ENCODE measurements at regions of chr19 and their contacts with region 1.

Region 1: DNA sequence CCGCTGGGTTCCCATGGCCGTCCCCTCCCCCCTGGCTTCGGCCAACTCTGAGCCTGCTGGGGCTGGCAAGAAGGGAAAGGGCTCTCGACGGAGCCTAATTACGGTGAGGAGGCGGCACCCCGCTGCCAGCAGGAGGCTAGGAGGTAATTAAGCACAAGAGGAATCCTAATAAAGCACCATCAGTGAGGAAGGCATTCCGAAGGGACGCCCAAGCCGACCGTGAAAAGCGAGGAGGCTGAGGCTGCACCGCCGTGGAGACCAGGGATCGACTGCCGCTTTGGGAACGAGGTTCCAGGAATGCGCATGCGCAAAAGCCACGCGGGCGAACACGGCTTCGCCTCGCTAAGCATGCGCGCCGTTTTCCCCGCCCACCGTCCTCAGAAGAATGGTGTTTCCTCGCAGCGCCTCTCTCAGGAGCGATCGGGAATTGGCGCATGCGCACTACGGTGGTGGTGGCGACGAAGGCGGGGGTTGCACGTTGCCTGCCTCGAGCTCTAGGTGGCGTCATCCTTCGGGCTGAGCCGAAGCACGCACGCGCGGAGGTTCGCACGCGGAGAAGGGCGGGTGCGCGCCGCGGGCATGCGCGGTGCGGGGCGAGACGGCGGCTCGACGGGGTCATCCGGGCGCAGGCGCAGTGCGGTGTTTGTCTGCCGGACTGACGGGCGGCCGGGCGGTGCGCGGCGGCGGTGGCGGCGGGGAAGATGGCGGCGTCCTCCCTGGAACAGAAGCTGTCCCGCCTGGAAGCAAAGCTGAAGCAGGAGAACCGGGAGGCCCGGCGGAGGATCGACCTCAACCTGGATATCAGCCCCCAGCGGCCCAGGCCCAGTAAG is at the start of gene MAP2K7:
- DNase-seq: peak; percentile 99
- H3K4me3 ChIP-seq: peak within 1 kb of the TSS; percentile 80 to 87
- H3K27ac ChIP-seq: peak within 1 kb of the TSS; percentile 68 to 89; a peak in 3 of 4 replicates
- H3K4me1 ChIP-seq: peaks cover 0 to 19% of the 10 kb centered on the region in 2 experiments; a peak in 2 of 4 replicates
- H3K27me3 ChIP-seq: no peaks in the 10 kb centered on the region
- CTCF ChIP-seq: peak; percentile 60
- EP300 ChIP-seq: no peak
- RAD21 ChIP-seq: peak; percentile 54
- polyA plus RNA-seq, gene MAP2K7: 13.0 and 13.6 TPM in 2 replicates

Region 2: DNA sequence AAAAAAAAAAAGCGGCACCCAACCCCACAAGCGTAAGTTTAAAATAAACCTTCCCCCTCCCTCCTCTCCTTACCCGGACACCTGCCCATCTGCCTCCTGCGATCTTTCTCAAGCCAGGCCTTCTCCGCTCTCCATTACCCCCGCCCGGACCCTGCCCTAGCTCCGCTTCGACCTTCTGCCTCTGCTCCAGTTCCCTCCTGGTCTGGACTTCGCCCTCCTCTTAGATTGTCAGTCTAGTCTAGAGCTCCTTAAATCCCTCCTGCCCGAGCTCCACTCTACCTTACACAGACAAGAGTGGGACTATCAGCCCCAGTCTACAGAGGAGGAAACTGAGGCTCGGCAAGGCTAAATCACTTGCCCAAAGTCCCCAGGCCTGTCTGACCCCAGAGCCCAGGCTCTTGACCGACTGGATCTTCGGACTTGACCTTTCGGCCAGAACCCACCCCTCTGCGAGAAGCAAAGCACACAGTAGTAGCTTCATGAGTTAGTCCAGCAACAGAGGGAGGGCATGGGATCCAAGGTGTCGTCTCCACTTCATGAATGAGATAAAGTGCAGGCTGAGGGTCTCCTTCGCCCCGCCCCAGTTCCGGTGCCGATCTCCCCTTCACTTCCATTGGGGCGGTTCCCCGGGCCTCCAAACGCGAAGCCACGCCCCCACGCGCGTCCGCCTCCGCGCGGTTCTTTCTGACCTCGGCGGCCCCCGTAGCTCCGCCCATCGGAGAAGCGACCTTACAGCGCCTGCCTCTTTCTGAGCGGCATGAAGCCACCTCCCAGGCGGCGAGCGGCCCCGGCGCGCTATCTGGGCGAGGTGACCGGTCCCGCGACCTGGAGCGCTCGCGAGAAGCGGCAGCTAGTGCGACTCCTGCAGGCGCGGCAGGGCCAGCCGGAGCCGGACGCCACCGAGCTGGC is 16.4 kb after region 1 on chr19 and contains the start of gene SNAPC2:
- CTCF ChIA-PET with region 1: interaction called, 26 read pairs
- POLR2A ChIA-PET with region 1: interaction called, 8 read pairs
- DNase-seq: peak; percentile 90
- H3K4me3 ChIP-seq: peak within 1 kb of the TSS; percentile 77
- H3K27ac ChIP-seq: peak within 1 kb of the TSS; percentile 86 to 92
- H3K4me1 ChIP-seq: peaks cover 10 to 41% of the 10 kb centered on the region in 2 experiments; a peak in 2 of 4 replicates
- H3K27me3 ChIP-seq: peaks cover 7% of the 10 kb centered on the region; the same call in 1 of the 2 replicates
- CTCF ChIP-seq: no peak
- EP300 ChIP-seq: no peak; a peak in 1 of 4 replicates
- RAD21 ChIP-seq: no peak
- polyA plus RNA-seq, gene SNAPC2: 29.7 and 38.7 TPM in 2 replicates

Measured in SK-N-SH (cell line).